ENCODE measurements at regions of chr14 and their contacts with region 1.

Region 1: DNA sequence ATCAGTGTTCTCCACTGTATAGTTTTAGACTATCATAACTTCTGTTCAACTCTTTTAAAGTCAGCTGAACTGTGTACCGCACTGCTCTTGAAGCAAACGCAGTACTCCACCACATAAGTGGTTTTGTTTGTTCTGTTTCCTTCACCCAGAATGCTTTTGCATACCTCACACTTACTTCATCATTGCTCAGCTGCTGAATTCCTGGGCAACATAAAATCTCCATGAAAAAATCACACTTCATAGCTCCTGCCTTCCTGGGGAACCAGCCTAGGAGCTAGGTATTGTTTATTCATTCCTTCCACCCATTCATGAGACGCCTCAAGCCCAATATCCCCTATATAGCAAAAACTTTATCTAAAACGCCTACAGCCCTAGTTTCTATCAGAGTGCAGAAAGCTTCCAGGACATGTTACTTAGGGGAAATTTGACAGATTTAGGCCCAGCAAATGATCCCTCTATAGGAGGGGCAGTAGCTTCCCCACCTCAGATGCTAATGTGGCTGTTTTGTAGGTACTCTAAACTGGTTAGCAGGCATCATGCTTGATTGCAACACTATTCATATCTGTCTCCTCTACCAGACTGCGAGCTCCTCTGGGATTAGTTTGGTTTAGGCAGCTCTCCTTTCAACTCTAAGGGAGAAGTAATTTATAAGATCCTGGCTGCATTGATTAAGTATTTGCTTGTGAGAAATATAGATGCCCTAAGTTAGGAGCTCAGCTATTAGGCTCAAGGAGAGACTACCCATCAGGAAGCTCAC is 44.5 kb downstream of the LRRC9 start:
- DNase-seq: no peak
- H3K4me3 ChIP-seq: no peak overlapping the region
- H3K27me3 ChIP-seq: no peaks in the 10 kb centered on the region
- CTCF ChIP-seq: no peak

Region 2: GRCh38 chr14:59983048-59983447 is 18.6 kb after region 1 on chr14:
- CTCF ChIA-PET with region 1: interaction called, 21 read pairs
- POLR2A ChIA-PET with region 1: no interaction called
- DNase-seq: no peak
- H3K4me3 ChIP-seq: no peak overlapping the region
- H3K27me3 ChIP-seq: no peaks in the 10 kb centered on the region
- CTCF ChIP-seq: no peak

Region 3: DNA sequence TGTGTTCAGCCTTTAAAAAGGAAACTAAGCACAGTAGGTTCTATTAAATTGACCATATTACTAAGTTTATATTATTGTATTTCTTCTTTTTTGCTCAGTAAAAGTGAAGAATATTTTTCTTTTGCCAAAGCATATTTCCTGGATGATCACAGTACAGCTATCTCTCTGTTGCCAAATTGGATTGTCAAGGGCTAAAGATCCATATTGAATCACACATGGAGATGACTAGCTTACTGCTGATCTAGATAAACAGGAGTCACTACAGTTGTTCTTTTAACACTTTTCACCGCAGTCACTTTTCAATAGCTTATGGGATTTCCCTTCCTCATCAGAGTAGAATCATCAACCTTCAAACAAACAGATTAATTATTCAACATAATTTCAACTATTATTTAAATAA is 34.1 kb after region 1 on chr14:
- CTCF ChIA-PET with region 1: interaction called, 11 read pairs
- POLR2A ChIA-PET with region 1: no interaction called
- DNase-seq: no peak
- H3K4me3 ChIP-seq: no peak overlapping the region
- H3K27me3 ChIP-seq: no peaks in the 10 kb centered on the region
- CTCF ChIP-seq: no peak

Region 4: GRCh38 chr14:60064491-60065072 is 100.2 kb after region 1 on chr14:
- CTCF ChIA-PET with region 1: interaction called, 12 read pairs
- POLR2A ChIA-PET with region 1: no interaction called
- DNase-seq: no peak
- H3K4me3 ChIP-seq: no peak overlapping the region
- H3K27me3 ChIP-seq: no peaks in the 10 kb centered on the region
- CTCF ChIP-seq: peak; percentile 57

Region 5: DNA sequence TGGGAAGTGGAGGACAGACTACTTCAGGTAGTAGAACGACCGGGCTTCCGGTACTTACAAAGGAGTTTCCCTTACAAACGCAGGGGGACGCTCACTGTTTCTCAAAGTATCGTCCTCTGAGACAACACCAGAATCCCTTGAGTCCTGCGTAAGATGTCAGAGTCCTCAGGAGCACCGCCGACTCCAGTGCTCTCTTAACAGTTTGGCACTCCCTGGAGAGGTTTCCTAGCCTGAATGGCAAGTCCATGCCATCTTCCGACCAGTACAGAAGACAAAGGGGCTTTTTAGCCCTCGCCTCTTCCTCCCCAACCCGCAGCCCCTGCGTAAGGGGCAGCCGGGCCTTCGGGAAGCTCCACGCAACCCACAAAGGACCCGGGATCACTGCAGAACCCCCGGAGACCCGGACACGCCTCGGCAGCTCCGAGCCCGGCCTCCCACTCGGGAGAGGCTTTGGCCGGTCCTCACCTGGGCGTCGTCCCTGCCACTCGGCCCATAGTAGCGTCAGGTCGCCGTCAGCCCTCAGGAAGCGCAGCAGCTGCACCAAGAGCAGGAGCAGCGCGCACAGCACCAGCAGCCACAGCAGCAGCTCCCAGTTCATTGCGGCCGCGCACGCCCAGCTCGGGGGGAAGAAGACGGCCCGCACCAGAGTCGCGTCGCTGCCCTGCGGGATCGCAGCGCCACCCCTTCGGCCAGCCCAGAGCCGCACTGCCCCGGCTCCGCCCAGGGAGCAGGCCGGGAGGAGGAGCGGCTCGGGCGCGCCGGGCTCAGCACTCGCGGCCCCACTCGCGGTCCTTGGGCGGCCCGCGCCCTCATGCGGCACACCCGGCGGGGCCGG is 200.5 kb after region 1 on chr14 and contains the start of gene DHRS7:
- CTCF ChIA-PET with region 1: interaction called, 15 read pairs
- POLR2A ChIA-PET with region 1: no interaction called
- DNase-seq: no peak
- H3K4me3 ChIP-seq: peak within 1 kb of the TSS; percentile 78
- H3K27me3 ChIP-seq: 0 out of 2 replicates have a peak, but pooled peaks cover 2% of the 10 kb centered on the region
- CTCF ChIP-seq: peak; percentile 30; the same call in 1 of the 2 replicates
- polyA plus RNA-seq, gene DHRS7: 38.0 and 43.3 TPM in 2 replicates

Region 6: GRCh38 chr14:60184146-60184904 is 219.9 kb after region 1 on chr14:
- CTCF ChIA-PET with region 1: interaction called, 184 read pairs
- POLR2A ChIA-PET with region 1: no interaction called
- DNase-seq: no peak
- H3K4me3 ChIP-seq: peak overlapping the region; percentile 27
- H3K27me3 ChIP-seq: no peaks in the 10 kb centered on the region
- CTCF ChIP-seq: peak; percentile 57

Measured in BJ (cell line).